OCI-LY7 (cell line): ENCODE measurements at regions of chr5 and their contacts with region 1.

Region 1: DNA sequence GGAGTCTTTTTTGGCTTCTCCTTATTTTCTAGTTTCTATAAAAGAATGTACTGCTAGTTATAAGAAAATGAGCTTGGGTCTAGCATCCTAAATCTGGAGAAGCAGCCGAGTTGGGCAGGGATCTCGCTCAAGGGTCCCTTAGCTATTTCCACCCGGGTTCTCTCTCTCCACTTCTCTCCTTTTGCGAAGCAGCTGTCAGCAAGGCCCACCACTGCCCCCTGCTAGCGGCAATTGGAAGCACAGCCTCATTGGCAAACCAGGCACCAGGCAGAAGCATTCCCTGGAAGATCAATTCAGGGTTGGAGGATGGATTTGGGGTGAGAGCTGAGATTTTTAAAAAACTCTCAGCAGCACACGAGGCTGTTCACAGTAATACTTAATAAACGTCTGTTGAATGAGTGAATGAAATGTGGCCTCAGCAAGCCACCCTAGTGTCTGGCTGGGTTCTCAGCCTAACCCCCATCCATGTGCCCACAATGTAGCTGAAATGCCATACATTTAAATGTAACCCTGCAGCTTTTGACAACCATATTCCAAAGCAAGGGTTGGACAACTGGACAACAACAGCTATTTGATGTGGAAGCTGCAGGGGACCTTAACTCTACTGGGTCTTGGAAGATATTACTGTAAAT is 34.6 kb upstream of the TNIP1 start:
- DNase-seq: peak; percentile 72
- H3K4me3 ChIP-seq: no peak overlapping the region
- H3K27ac ChIP-seq: no peak overlapping the region
- H3K4me1 ChIP-seq: peaks cover 9% of the 10 kb centered on the region
- CTCF ChIP-seq: peak; percentile 99

Region 2: DNA sequence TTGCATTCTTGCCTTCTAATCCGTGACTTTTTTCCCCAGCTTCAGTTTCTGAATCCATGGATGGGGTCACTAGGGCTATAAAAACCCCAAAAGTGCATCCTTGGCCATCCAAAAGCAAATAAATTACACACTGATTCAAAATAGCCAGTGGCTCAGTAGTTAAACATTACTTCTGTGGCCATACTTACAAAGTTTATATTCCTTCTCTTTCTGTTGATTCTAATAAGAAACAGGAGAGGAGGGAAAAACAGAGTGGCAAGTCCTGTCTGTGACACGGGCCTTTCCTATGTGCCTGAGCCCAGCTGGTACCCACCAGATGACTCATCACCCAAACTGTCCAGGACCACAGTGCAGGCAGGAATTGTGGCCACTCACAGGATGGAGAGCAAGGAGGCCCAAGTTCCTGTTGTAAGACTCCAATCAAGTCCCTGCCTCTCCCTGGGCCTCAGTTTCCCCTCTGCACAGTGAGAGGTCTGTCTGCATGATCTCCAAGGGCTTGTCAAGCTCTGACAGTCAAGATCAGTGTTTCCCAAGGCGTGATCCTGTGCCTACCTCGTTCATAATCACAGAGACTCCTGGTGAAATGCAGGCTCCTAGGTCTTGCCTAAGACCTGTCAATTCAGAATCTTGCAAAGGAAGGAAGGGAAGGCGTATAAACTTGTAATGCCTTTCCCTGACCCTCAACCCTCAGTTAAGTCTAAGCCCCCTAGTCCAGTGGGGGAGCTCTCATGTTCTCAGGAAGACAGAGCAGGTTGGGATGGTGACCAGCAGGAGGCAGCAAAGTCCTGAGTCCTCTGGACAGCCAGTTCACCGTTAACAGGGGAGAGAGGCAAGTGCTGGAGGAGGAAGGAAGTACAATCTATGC is 64.1 kb before region 1 on chr5:
- CTCF ChIA-PET with region 1: interaction called, 32 read pairs
- POLR2A ChIA-PET with region 1: interaction called, 4 read pairs
- intact Hi-C with region 1: loop called (anchors 1 kb)
- DNase-seq: peak; percentile 87
- H3K4me3 ChIP-seq: no peak overlapping the region
- H3K27ac ChIP-seq: no peak overlapping the region
- H3K4me1 ChIP-seq: peaks cover 7% of the 10 kb centered on the region
- CTCF ChIP-seq: peak; percentile 97

Region 3: GRCh38 chr5:151097786-151098498 is 17.4 kb before region 1 on chr5:
- CTCF ChIA-PET with region 1: interaction called, 3 read pairs
- POLR2A ChIA-PET with region 1: interaction called, 10 read pairs
- intact Hi-C with region 1: no loop called
- DNase-seq: no peak
- H3K4me3 ChIP-seq: no peak overlapping the region
- H3K27ac ChIP-seq: no peak overlapping the region
- H3K4me1 ChIP-seq: peaks cover 26% of the 10 kb centered on the region
- CTCF ChIP-seq: no peak